Mucosa of descending colon (tissue), 3 donors: ENCODE measurements at regions of chr16 and their contacts with region 1.

Region 1: DNA sequence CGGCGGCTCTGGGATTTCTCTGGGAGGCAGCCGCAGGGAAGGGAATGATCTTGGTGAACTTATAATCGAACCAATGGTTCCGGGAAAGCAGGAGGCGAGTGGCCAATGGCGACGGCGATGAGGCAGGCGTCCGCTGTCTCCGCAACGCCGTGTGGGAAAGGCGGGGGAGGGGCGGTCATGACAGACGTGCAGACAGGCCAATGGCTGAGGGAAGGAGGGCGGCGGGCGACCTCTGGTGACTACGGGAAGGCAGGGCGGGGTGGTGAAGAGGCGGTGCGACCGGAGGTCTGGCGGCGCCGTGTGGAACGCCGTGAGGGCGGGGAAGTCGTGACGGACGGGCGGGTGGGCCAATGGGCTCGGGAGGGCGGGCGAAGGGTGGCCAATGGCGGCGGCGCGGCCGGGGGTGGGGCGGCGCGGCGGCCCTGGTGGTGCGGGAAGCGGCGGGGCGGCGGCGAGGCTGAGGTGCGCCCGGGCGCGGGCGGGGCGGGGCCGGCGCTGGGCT is at the start of gene RAB40C:
- DNase-seq: peak; percentile 99 to 100 (median 99)
- ATAC-seq: peak; percentile 82
- H3K4me3 ChIP-seq: peak within 1 kb of the TSS; percentile 90
- H3K4me1 ChIP-seq: peaks cover 45% of the 10 kb centered on the region
- CTCF ChIP-seq: peak; percentile 28
- total RNA-seq, gene RAB40C: 31.2 to 51.0 (median 40.1) TPM

Region 2: GRCh38 chr16:649624-650023 is 59.9 kb after region 1 on chr16:
- intact Hi-C with region 1: loop called in 1 of 2 experiments (anchors 10 kb)
- DNase-seq: peak in 1 of 3 donors; percentile 58
- ATAC-seq: no peak
- H3K4me3 ChIP-seq: peak overlapping the region; percentile 25
- H3K4me1 ChIP-seq: peaks cover 44% of the 10 kb centered on the region
- CTCF ChIP-seq: no peak

Region 3: GRCh38 chr16:760545-761343 is 171.0 kb after region 1 on chr16 and contains the start of gene MSLN:
- intact Hi-C with region 1: no loop called
- DNase-seq: peak in 1 of 3 donors; percentile 53
- ATAC-seq: peak; percentile 38
- H3K4me3 ChIP-seq: no peak within 1 kb of the TSS
- H3K4me1 ChIP-seq: no peaks in the 10 kb centered on the region
- CTCF ChIP-seq: no peak
- total RNA-seq, gene MSLN: 3.4 to 7.0 (median 4.7) TPM

Region 4: DNA sequence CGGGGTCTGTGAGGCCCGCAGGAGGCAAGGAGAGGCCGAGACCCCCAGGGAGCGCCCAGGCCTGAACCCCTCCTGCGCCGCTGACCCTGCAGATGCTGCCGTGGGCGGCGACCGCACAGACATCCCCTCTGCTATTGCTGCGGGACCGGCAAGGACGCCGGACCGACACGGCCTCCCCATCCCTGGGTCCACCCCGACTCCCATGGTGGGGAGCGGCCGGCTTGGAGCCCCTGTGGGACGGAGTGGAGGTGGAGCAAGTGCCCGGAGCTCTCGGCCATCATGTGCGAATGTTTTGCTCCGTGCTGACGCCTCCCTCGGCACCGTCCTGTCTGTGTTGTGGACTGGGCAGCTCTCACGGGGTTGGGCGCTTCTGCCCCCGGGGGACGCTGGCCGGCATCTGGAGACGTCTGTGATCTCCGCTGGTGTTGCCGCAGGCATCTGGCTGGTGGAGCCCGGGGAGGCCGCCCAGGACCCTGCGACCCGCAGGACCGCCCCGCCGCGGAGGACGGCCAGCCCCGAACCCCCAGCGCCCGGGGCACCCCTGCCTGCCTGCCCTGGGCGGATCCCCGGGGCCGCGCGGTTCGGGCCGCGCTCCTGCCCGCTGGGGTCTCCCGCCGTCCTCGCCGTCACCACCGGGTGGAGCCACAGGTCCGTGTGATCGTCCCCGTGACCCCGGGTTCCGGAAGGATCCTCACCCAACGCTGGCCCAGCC is 223.7 kb after region 1 on chr16:
- intact Hi-C with region 1: no loop called
- DNase-seq: peak in 1 of 3 donors; percentile 45
- ATAC-seq: peak; percentile 73
- H3K4me3 ChIP-seq: no peak overlapping the region
- H3K4me1 ChIP-seq: peaks cover 2% of the 10 kb centered on the region
- CTCF ChIP-seq: no peak